ENCODE measurements at regions of chr15 and their contacts with region 1.

Region 1: DNA sequence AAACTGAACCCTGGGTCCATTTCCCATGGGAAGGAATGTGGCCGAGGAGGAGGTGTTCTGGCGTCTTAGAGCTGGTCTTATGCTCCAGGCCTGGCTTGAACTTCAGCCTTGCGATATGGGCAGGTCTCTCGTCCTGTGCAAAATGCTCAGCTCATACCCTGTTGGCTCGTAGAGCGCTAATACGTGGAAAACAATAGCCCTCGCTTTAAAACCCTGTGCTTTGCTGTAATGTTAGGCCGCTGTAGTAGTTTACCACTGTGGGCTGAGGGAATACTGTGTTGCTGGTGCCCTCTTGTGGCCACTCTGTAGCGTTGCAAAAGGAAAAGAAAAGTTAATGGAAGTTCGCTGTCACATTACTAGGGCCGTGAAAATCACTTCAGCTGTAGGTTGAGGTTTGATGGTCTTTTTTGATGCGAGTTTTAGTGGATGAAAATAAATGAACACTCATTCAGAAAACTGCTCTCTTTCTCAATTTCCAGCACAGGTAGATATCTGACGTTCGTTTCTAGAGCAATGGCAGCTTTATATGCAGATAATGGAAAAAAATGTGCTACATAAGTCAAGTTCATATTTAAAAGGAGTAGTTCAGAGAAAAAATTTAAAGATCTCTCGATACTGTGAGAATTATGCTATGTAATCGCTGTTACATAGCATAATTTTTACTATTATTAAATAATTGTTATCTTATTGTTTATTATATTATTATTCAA is 92.9 kb downstream of the MCTP2 start:
- DNase-seq: no peak
- H3K4me3 ChIP-seq: no peak overlapping the region
- H3K27ac ChIP-seq: no peak overlapping the region
- H3K4me1 ChIP-seq: no peaks in the 10 kb centered on the region
- H3K27me3 ChIP-seq: no peaks in the 10 kb centered on the region
- CTCF ChIP-seq: peak; percentile 74 to 88 (median 80)
- POLR2A ChIP-seq: no peak

Region 2: DNA sequence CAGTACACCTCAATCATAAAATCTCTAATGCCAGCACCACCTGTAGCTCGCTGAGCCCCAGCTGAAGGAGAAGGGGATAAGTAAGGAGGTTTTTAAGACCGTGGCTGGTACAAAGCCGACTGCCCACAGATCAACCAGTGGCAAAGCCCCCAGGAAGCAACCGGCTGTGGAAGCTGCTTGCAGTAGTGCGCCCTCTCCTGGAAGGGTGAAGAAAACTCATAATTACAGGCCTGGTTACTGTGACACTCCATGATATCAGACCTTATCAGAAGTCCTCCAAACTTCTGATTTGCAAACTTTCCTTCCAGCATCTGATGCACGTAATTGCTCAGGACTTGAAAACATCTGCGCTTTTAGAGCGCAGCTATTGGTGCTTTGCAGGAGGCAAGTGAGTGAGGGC is 156.0 kb before region 1 on chr15:
- intact Hi-C with region 1: loop called (anchors 5 kb)
- DNase-seq: no peak
- H3K4me3 ChIP-seq: no peak overlapping the region
- H3K27ac ChIP-seq: no peak overlapping the region
- H3K4me1 ChIP-seq: no peaks in the 10 kb centered on the region
- H3K27me3 ChIP-seq: no peaks in the 10 kb centered on the region
- CTCF ChIP-seq: no peak
- POLR2A ChIP-seq: no peak